Right ventricle myocardium inferior (tissue), 1 donor: ENCODE measurements at regions of chr6 and their contacts with region 1.

Region 1: DNA sequence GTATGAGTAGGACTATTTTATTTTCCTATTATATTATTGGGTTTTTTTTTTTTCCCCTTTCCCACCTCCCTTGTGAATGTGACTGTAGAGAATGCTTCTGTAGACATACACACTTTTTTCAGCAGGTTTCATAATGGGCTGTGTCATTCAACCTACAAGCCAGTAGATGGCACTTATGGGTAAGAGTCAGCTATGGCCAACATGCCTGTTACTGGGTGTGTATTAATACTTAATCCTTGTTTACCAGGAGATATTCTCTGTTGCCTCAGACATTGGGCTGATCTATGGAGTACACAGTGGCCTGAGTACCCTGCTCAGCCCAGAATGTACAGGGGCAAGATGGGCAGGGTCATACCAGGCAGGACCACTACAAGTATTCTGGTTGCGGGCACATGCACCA is 382.5 kb downstream of the EPHA7 start:
- DNase-seq: no peak
- ATAC-seq: no peak

Region 2: GRCh38 chr6:93419304-93420162 is 382.7 kb after region 1 on chr6 and contains the start of gene EPHA7:
- intact Hi-C with region 1: loop called (anchors 5 kb)
- DNase-seq: peak; percentile 89
- ATAC-seq: peak; percentile 99
- total RNA-seq, gene EPHA7: 1.3 TPM